CD14-positive monocyte (primary cell): ENCODE measurements at regions of chr6 and their contacts with region 1.

Region 1: DNA sequence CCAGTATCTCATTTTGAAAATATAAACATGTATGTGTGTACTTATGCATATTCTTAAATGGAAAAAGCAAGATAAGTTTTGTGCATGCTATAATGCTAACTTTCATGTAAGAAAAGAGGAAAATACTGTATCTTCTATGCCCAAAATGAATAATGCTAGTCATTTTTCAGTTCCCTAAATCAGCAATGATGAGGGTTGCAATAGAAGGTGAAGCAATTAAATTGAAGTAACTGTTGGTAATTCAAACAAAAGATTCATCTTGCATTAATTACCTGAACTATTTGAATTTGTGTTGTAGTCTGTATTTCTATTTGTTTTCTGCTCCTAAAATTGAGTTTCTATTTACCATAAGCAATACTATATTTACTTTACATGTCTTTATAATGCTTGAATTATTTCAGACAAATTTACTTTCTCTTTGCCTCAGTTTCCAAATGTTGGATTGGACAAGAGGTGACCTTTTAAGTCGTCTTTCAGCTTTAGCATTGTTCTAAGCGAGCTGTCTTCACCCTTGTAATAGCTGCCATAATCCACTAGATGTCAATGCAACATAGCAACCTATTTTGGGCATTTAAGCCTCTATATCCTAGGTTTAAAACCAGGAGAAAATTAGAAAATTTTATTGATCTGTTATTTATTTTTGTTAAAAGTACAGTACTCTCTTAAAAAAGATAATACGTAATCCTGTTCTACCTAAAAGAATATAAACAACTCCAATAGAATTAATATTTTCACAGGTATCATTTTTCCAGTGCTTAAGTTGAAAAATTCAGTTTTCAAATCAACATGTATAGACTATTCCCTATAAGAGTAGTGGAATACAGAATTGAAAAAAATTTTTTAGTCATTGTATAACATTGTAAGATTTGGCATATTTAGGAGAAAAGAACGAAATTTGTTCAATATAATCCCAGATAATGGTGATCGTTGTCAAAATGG is 52.3 kb upstream of the IFNGR1 start:
- DNase-seq: peak in 2 of 3 donors; percentile 58 to 67
- H3K4me3 ChIP-seq: peak overlapping the region in 1 of 3 experiments; percentile 32
- H3K4me3 Mint-ChIP-seq: peak overlapping the region in 1 of 2 donors; percentile 35
- H3K27ac ChIP-seq: peak overlapping the region in 1 of 2 donors; percentile 68
- H3K27ac Mint-ChIP-seq: peak overlapping the region; percentile 50 to 87 (median 78)
- H3K4me1 ChIP-seq: peaks cover 15 to 24% of the 10 kb centered on the region in 2 donors
- H3K4me1 Mint-ChIP-seq: peaks cover 17% of the 10 kb centered on the region
- H3K27me3 ChIP-seq: no peaks in the 10 kb centered on the region
- H3K27me3 Mint-ChIP-seq: peaks cover 0 to 2% (median 0%) of the 10 kb centered on the region in 3 donors
- CTCF ChIP-seq: peak; percentile 91

Region 2: GRCh38 chr6:137224799-137225198 is 46.7 kb before region 1 on chr6:
- intact Hi-C with region 1: loop called in 1 of 2 experiments (anchors 5 kb)
- DNase-seq: peak; percentile 90 to 98 (median 96)
- H3K4me3 ChIP-seq: peak overlapping the region in 1 of 3 experiments; percentile 2
- H3K4me3 Mint-ChIP-seq: peak overlapping the region in 1 of 2 donors; percentile 55
- H3K27ac ChIP-seq: peak overlapping the region; percentile 98 to 99
- H3K27ac Mint-ChIP-seq: peak overlapping the region; percentile 98 to 100 (median 99)
- H3K4me1 ChIP-seq: peaks cover 88 to 92% of the 10 kb centered on the region in 2 donors
- H3K4me1 Mint-ChIP-seq: peaks cover 86% of the 10 kb centered on the region
- H3K27me3 ChIP-seq: no peaks in the 10 kb centered on the region
- H3K27me3 Mint-ChIP-seq: peaks cover 0 to 5% (median 0%) of the 10 kb centered on the region in 3 donors
- CTCF ChIP-seq: no peak

Region 3: GRCh38 chr6:137323860-137324259 is 52.3 kb after region 1 on chr6:
- intact Hi-C with region 1: no loop called
- DNase-seq: peak in 1 of 3 donors; percentile 13
- H3K4me3 ChIP-seq: no peak overlapping the region
- H3K4me3 Mint-ChIP-seq: no peak overlapping the region
- H3K27ac ChIP-seq: no peak overlapping the region
- H3K27ac Mint-ChIP-seq: no peak overlapping the region
- H3K4me1 ChIP-seq: no peaks in the 10 kb centered on the region
- H3K4me1 Mint-ChIP-seq: no peaks in the 10 kb centered on the region
- H3K27me3 ChIP-seq: no peaks in the 10 kb centered on the region
- H3K27me3 Mint-ChIP-seq: peaks cover 0 to 5% (median 2%) of the 10 kb centered on the region in 3 donors
- CTCF ChIP-seq: no peak